Mammary epithelial cell (primary cell): ENCODE measurements at regions of chr11 and their contacts with region 1.

Region 1: GRCh38 chr11:58222721-58223120 is 6.0 kb downstream of the OR10Q1 start:
- DNase-seq: peak; percentile 84
- H3K4me3 ChIP-seq: no peak overlapping the region
- H3K27ac ChIP-seq: no peak overlapping the region
- H3K4me1 ChIP-seq: no peaks in the 10 kb centered on the region
- H3K27me3 ChIP-seq: no peaks in the 10 kb centered on the region
- CTCF ChIP-seq: no peak

Region 2: GRCh38 chr11:58075781-58076180 is 146.9 kb before region 1 on chr11:
- CTCF ChIA-PET with region 1: no interaction called
- dilution Hi-C with region 1: no loop called
- in situ Hi-C with region 1: no loop called
- intact Hi-C with region 1: no loop called
- DNase-seq: peak; percentile 80
- H3K4me3 ChIP-seq: no peak overlapping the region
- H3K27ac ChIP-seq: no peak overlapping the region
- H3K4me1 ChIP-seq: no peaks in the 10 kb centered on the region
- H3K27me3 ChIP-seq: no peaks in the 10 kb centered on the region
- CTCF ChIP-seq: no peak

Region 3: DNA sequence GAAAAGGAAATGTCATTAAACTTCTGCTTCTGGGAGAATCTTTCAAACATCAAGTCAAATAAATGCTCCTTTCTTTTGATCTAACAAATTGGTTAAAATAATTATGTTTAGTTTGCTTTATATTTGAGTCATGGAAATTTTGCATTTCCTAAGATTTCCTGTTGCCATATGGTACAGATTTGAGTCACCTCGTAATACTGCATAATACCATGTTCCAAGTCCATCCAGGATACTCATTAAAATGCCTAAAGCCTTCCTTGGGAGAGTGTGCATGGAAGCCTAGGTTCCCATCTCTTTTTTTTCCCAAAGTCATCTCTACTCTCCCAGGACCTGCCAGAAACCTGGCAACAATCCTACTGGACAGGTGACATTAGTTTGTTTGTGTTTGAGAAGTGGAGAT is 101.6 kb before region 1 on chr11:
- CTCF ChIA-PET with region 1: no interaction called
- dilution Hi-C with region 1: no loop called
- in situ Hi-C with region 1: loop called in 1 of 2 experiments (anchors 25 kb)
- intact Hi-C with region 1: no loop called
- DNase-seq: no peak
- H3K4me3 ChIP-seq: no peak overlapping the region
- H3K27ac ChIP-seq: no peak overlapping the region
- H3K4me1 ChIP-seq: no peaks in the 10 kb centered on the region
- H3K27me3 ChIP-seq: no peaks in the 10 kb centered on the region
- CTCF ChIP-seq: no peak